ENCODE measurements at regions of chr2 and their contacts with region 1.

Region 1: DNA sequence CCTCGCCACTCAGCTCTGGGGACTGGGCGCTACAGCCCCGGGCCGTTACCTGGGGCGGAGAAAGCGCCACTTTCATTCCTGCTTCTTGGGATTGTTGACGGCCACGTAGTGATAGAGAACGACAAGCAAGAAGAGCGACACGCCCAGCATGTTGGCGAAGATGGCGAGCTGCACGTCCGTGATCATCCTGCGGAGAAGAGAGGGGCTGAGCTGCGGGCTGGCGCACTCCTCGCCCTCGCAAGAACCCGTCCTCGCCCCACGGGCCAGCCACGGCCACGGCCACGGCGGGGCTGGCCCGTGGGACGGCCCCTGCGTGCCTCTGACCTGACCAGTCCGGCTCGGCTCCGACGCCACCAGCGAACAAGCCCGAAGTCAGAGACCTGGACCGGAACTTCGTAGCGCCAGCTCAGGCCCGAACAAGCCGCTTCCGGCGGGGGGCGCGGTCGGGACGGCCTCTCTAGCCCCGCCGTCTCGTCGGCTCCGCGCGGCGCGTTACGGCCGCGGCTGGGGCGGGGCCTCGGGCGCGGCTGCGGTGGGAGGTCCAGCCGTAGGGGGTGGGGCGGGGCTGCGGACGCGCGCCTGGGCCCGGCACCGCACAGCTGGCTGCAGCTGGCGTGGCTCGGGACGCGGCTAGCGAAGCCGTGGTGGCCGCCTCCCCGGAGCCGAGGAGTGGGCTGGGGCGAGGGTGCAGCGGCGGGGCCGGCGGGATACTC is at the start of gene OST4:
- DNase-seq: peak; percentile 93 to 97
- ATAC-seq: peak; percentile 90 to 96
- H3K4me3 ChIP-seq: peak within 1 kb of the TSS; percentile 92
- H3K27ac ChIP-seq: peak within 1 kb of the TSS; percentile 88 to 93
- H3K4me1 ChIP-seq: peaks cover 19% of the 10 kb centered on the region
- CTCF ChIP-seq: no peak
- EP300 ChIP-seq: no peak
- POLR2A ChIP-seq: peak; percentile 67
- RAD21 ChIP-seq: no peak
- polyA plus RNA-seq, gene OST4: 392 and 408 TPM in 2 replicates

Region 2: DNA sequence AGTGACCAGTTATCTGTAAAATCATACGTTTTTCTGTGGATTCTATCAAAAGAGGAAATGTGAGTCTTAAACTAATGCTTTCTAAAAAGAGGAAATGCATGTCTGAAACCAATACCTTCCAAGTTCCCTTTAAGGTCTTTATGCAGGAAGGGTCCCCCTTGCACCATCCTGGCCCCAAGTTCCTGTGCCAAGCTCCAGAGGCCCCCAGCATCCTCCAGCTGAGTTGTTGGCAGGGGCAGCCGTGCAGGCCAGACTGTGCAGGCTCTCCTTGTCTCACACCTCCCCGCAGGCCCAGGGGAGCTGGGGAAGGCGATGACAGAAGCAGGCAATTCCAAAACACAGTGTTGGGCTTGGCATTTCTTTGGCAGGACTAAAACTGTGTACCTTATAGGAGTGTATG is 184.3 kb before region 1 on chr2:
- CTCF ChIA-PET with region 1: no interaction called
- POLR2A ChIA-PET with region 1: no interaction called
- DNase-seq: no peak
- ATAC-seq: no peak
- H3K4me3 ChIP-seq: no peak overlapping the region
- H3K27ac ChIP-seq: no peak overlapping the region
- H3K4me1 ChIP-seq: no peaks in the 10 kb centered on the region
- CTCF ChIP-seq: no peak
- EP300 ChIP-seq: no peak
- POLR2A ChIP-seq: no peak
- RAD21 ChIP-seq: no peak

Region 3: GRCh38 chr2:27050281-27050995 is 21.0 kb before region 1 on chr2:
- CTCF ChIA-PET with region 1: interaction called, 143 read pairs
- POLR2A ChIA-PET with region 1: interaction called, 37 read pairs
- DNase-seq: peak; percentile 95 to 97
- ATAC-seq: peak; percentile 77 to 86
- H3K4me3 ChIP-seq: peak overlapping the region; percentile 86
- H3K27ac ChIP-seq: peak overlapping the region; percentile 83 to 93
- H3K4me1 ChIP-seq: peaks cover 13% of the 10 kb centered on the region; the same call in 2 of the 3 replicates
- CTCF ChIP-seq: no peak
- EP300 ChIP-seq: no peak
- POLR2A ChIP-seq: peak; percentile 97
- RAD21 ChIP-seq: no peak

Region 4: DNA sequence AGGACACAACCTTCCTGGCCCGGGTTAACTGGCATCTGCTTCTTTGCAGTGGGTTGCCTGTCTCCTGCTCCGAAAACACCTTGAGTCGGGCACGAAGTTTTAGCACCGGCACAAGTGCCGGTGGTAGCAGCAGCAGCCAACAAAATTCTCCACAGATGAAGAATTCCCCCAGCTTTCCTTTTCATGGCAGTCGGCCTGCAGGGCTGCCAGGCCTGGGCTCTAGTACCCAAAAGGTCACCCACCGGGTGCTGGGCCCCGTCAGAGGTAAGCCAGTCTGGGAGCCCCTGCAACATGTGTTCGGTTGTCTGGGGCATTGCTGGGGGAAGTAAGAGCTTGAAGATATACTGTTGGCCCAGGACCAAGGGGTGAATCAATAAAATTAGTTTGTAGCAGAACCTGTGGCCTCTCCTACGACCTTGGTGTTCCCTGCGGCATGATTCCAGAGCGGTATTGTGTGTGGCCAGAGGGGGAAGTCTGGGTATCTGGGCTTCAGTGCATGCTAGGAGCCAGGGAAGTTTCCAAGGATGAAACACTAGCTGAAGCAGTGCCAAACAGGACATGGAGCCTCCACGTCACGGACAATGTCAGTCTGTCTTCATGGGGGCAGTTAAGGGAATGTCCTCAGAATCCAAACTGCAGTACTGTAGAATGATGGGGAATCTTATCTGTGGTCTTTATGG is 12.2 kb before region 1 on chr2:
- CTCF ChIA-PET with region 1: interaction called, 143 read pairs
- POLR2A ChIA-PET with region 1: interaction called, 35 read pairs
- DNase-seq: no peak
- ATAC-seq: no peak
- H3K4me3 ChIP-seq: no peak overlapping the region
- H3K27ac ChIP-seq: no peak overlapping the region
- H3K4me1 ChIP-seq: peaks cover 5% of the 10 kb centered on the region; the same call in 1 of the 3 replicates
- CTCF ChIP-seq: no peak
- EP300 ChIP-seq: no peak
- POLR2A ChIP-seq: no peak
- RAD21 ChIP-seq: no peak

Region 5: GRCh38 chr2:27217217-27218121 is 146.0 kb after region 1 on chr2 and contains the start of gene CAD:
- CTCF ChIA-PET with region 1: no interaction called
- POLR2A ChIA-PET with region 1: no interaction called
- DNase-seq: peak; percentile 84 to 92
- ATAC-seq: peak; percentile 88 to 92
- H3K4me3 ChIP-seq: peak within 1 kb of the TSS; percentile 65
- H3K27ac ChIP-seq: peak within 1 kb of the TSS; percentile 94 to 95
- H3K4me1 ChIP-seq: peaks cover 28% of the 10 kb centered on the region
- CTCF ChIP-seq: no peak
- EP300 ChIP-seq: no peak
- POLR2A ChIP-seq: peak; percentile 90
- RAD21 ChIP-seq: no peak
- polyA plus RNA-seq, gene CAD: 50.5 and 61.8 TPM in 2 replicates